CD8-positive, alpha-beta T cell (primary cell): ENCODE measurements at regions of chrX and their contacts with region 1.

Region 1: DNA sequence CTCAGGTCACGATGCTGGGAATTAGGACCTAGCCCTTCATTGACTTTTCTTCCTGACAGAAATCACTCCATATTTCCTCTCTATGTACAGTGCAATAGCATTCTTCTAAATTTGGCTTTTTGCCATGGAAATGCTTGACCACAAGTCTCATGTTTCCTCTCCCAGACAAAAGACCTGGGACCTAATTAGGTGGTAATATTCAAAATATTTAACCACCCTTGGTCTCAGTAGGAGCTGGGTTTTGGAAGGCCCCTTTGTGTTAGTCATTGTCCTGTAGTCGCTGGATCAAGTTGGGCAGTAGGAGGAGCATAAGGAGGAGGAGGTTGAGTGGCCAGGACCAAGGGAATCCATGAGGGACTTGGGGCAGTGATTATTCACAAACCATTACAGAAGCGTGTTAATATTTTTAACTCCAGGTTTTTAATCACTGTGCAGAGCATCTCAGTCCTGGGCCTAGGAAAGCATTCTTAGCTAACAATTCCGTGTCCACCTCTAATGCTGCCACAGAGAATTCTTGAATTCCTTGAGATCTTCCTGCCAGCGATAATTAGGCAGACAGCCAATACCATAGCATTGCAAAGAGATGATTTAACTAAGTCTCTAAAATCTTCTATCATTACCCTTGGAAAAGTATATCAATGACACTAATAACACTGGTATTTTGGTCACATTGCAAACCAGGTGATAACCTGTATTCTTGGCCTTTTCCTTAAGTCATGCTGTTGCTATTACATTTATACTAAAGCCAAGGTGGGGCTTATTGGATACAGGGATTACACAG is 25.0 kb upstream of the SHROOM4 start:
- DNase-seq: no peak
- ATAC-seq: no peak
- H3K4me3 ChIP-seq: no peak overlapping the region
- H3K4me3 Mint-ChIP-seq: no peak overlapping the region
- H3K27ac ChIP-seq: no peak overlapping the region
- H3K27ac Mint-ChIP-seq: no peak overlapping the region
- H3K4me1 ChIP-seq: no peaks in the 10 kb centered on the region
- H3K4me1 Mint-ChIP-seq: no peaks in the 10 kb centered on the region
- H3K27me3 ChIP-seq: no peaks in the 10 kb centered on the region
- H3K27me3 Mint-ChIP-seq: peaks cover 4% of the 10 kb centered on the region
- CTCF ChIP-seq: no peak

Region 2: GRCh38 chrX:50770702-50771101 is 68.3 kb before region 1 on chrX:
- CTCF ChIA-PET with region 1: no interaction called
- POLR2A ChIA-PET with region 1: no interaction called
- intact Hi-C with region 1: loop called in 1 of 2 experiments (anchors 10 kb)
- DNase-seq: no peak
- ATAC-seq: no peak
- H3K4me3 ChIP-seq: no peak overlapping the region
- H3K4me3 Mint-ChIP-seq: no peak overlapping the region
- H3K27ac ChIP-seq: no peak overlapping the region
- H3K27ac Mint-ChIP-seq: no peak overlapping the region
- H3K4me1 ChIP-seq: no peaks in the 10 kb centered on the region
- H3K4me1 Mint-ChIP-seq: no peaks in the 10 kb centered on the region
- H3K27me3 ChIP-seq: no peaks in the 10 kb centered on the region
- H3K27me3 Mint-ChIP-seq: no peaks in the 10 kb centered on the region
- CTCF ChIP-seq: no peak

Region 3: GRCh38 chrX:50799531-50799961 is 39.5 kb before region 1 on chrX:
- CTCF ChIA-PET with region 1: no interaction called
- POLR2A ChIA-PET with region 1: no interaction called
- intact Hi-C with region 1: no loop called
- DNase-seq: no peak
- ATAC-seq: no peak
- H3K4me3 ChIP-seq: no peak overlapping the region
- H3K4me3 Mint-ChIP-seq: no peak overlapping the region
- H3K27ac ChIP-seq: no peak overlapping the region
- H3K27ac Mint-ChIP-seq: no peak overlapping the region
- H3K4me1 ChIP-seq: no peaks in the 10 kb centered on the region
- H3K4me1 Mint-ChIP-seq: no peaks in the 10 kb centered on the region
- H3K27me3 ChIP-seq: no peaks in the 10 kb centered on the region
- H3K27me3 Mint-ChIP-seq: no peaks in the 10 kb centered on the region
- CTCF ChIP-seq: no peak

Region 4: DNA sequence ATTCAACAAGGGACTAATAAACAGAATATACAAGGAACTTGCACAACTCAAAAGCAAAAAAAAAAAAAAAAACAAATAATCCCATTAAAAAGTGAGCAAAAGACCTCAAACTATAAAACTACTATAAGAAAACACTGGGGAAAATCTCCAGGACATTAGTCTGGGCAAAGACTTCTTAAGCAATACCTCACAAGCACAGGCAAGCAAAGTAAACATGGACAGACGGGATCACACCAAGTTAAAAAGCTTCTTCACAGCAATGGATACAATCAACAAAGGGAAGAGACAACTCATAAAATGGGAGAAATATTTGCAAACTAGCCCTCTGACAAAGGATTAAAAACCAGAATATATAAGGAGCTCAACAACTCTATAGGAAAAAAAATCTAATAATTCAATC is 54.5 kb after region 1 on chrX:
- CTCF ChIA-PET with region 1: no interaction called
- POLR2A ChIA-PET with region 1: no interaction called
- intact Hi-C with region 1: no loop called
- DNase-seq: no peak
- ATAC-seq: no peak
- H3K4me3 ChIP-seq: no peak overlapping the region
- H3K4me3 Mint-ChIP-seq: no peak overlapping the region
- H3K27ac ChIP-seq: no peak overlapping the region
- H3K27ac Mint-ChIP-seq: no peak overlapping the region
- H3K4me1 ChIP-seq: no peaks in the 10 kb centered on the region
- H3K4me1 Mint-ChIP-seq: no peaks in the 10 kb centered on the region
- H3K27me3 ChIP-seq: no peaks in the 10 kb centered on the region
- H3K27me3 Mint-ChIP-seq: peaks cover 5% of the 10 kb centered on the region
- CTCF ChIP-seq: no peak